CD4-positive, alpha-beta T cell (primary cell): ENCODE measurements at regions of chr1 and their contacts with region 1.

Region 1: DNA sequence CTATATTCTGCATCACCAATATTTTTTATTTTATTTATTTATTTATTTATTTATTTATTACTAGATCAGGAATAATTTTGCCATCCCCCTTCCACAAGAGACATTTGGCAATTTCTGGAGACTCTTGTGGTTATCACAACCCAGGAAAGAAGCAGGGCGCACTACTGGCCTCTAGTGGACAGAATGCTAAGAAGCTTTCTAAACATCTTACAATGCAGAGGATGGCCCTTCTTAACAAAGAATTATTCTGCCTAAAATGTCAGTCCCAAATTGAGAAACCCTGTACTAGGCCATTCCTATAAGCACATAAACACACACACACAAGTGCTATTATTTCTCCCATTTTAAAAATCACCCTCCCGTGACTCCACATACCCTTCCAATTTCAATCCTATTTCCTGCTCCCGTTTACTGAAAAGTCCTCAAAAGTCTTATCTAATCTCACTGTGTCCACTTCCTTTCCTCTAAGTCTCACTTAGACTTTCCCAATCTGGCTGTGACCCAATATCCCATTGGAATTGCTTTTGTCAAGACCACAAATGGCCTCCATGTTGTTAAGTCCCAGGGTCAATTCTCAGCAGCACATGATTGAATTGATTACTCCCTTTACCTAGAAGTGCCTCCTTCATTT is 43.7 kb upstream of the RNF11 start:
- DNase-seq: peak; percentile 22 to 73 (median 42)
- ATAC-seq: peak; percentile 58
- H3K4me3 ChIP-seq: no peak overlapping the region
- H3K4me3 Mint-ChIP-seq: no peak overlapping the region
- H3K27ac ChIP-seq: no peak overlapping the region
- H3K27ac Mint-ChIP-seq: no peak overlapping the region
- H3K4me1 ChIP-seq: no peaks in the 10 kb centered on the region
- H3K4me1 Mint-ChIP-seq: no peaks in the 10 kb centered on the region
- H3K27me3 ChIP-seq: peaks cover 0 to 4% of the 10 kb centered on the region in 2 experiments
- H3K27me3 Mint-ChIP-seq: no peaks in the 10 kb centered on the region
- CTCF ChIP-seq: peak; percentile 87

Region 2: GRCh38 chr1:50774759-50775351 is 417.5 kb before region 1 on chr1:
- CTCF ChIA-PET with region 1: interaction called, 15 read pairs
- POLR2A ChIA-PET with region 1: interaction called, 5 read pairs
- intact Hi-C with region 1: loop called (anchors 1 kb)
- DNase-seq: peak in 4 of 14 experiments; percentile 8 to 68 (median 57)
- ATAC-seq: no peak
- H3K4me3 ChIP-seq: no peak overlapping the region
- H3K4me3 Mint-ChIP-seq: no peak overlapping the region
- H3K27ac ChIP-seq: no peak overlapping the region
- H3K27ac Mint-ChIP-seq: no peak overlapping the region
- H3K4me1 ChIP-seq: no peaks in the 10 kb centered on the region
- H3K4me1 Mint-ChIP-seq: peaks cover 8% of the 10 kb centered on the region
- H3K27me3 ChIP-seq: no peaks in the 10 kb centered on the region
- H3K27me3 Mint-ChIP-seq: no peaks in the 10 kb centered on the region
- CTCF ChIP-seq: peak; percentile 86

Region 3: DNA sequence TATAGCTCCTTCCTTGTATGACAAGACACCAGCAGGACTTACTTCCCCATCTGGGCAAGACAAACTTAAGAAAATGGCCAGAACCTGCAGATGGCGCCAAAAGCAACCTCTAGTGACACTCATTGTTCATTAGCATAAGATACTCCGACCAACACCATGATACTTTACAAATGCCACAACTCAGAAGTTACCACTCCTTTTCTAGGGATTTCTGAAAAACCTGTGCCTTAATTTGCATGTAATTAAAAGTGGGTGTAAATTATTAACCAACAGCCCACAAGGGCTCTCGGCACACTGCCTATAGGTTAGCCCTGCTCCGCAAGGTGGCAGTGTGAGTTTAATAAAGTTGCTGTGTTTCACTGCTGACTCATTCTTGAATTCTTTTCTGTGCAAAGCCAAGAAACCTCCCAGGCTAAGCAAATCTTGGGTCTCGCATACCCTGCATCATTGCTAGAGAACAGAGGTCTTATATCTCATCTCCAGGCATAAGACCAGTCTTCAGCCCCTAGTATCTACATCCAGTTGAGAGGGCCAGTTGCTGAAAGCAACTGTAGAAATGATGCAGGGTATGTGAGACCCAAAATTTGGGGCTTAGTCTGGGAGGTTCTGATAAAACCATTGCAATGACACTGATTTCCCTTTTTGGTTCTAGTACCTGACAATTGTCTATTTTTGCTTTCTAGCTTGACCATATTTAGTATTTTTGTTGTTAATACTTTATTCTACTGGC is 318.7 kb before region 1 on chr1:
- CTCF ChIA-PET with region 1: interaction called, 8 read pairs
- POLR2A ChIA-PET with region 1: no interaction called
- intact Hi-C with region 1: loop called (anchors 1 kb)
- DNase-seq: peak; percentile 34 to 77 (median 57)
- ATAC-seq: peak; percentile 76
- H3K4me3 ChIP-seq: peak overlapping the region; percentile 18
- H3K4me3 Mint-ChIP-seq: no peak overlapping the region
- H3K27ac ChIP-seq: no peak overlapping the region
- H3K27ac Mint-ChIP-seq: no peak overlapping the region
- H3K4me1 ChIP-seq: no peaks in the 10 kb centered on the region
- H3K4me1 Mint-ChIP-seq: peaks cover 17% of the 10 kb centered on the region
- H3K27me3 ChIP-seq: no peaks in the 10 kb centered on the region
- H3K27me3 Mint-ChIP-seq: no peaks in the 10 kb centered on the region
- CTCF ChIP-seq: peak; percentile 93

Region 4: DNA sequence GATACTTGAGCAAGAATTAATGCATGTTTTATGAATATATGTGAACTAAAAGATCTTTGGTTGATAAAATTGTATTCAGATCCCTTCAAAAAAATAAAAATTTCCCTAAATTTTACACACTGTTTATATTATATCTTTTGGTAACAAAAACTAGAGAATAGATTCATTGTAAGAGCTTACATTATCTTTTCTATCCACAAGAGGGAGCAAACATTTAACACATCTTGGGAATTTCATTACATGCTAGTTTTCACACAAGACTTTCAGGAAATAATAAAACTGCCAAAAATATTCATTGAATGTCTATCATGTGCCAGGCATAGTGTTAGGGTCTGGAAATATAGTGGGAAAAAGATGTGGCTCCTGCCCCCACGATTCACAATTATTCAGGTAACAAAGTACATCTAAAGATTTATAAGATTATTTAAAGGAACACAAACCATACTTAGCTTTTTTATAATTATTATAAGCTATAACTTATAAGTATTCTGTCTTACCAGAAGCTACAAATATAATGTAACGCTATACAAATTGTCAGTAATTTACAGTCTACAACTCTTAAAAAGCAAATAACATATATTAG is 262.9 kb before region 1 on chr1:
- CTCF ChIA-PET with region 1: interaction called, 11 read pairs
- POLR2A ChIA-PET with region 1: no interaction called
- intact Hi-C with region 1: loop called (anchors 1 kb)
- DNase-seq: peak in 3 of 14 experiments; percentile 39 to 50 (median 46)
- ATAC-seq: no peak
- H3K4me3 ChIP-seq: no peak overlapping the region
- H3K4me3 Mint-ChIP-seq: no peak overlapping the region
- H3K27ac ChIP-seq: no peak overlapping the region
- H3K27ac Mint-ChIP-seq: no peak overlapping the region
- H3K4me1 ChIP-seq: no peaks in the 10 kb centered on the region
- H3K4me1 Mint-ChIP-seq: peaks cover 25% of the 10 kb centered on the region
- H3K27me3 ChIP-seq: no peaks in the 10 kb centered on the region
- H3K27me3 Mint-ChIP-seq: no peaks in the 10 kb centered on the region
- CTCF ChIP-seq: peak; percentile 69

Region 5: GRCh38 chr1:51296383-51297357 is 104.3 kb after region 1 on chr1:
- CTCF ChIA-PET with region 1: interaction called, 9 read pairs
- POLR2A ChIA-PET with region 1: no interaction called
- intact Hi-C with region 1: loop called in 1 of 2 experiments (anchors 5 kb)
- DNase-seq: peak; percentile 41 to 80 (median 58)
- ATAC-seq: peak; percentile 81
- H3K4me3 ChIP-seq: peak overlapping the region; percentile 51
- H3K4me3 Mint-ChIP-seq: peak overlapping the region; percentile 59
- H3K27ac ChIP-seq: no peak overlapping the region
- H3K27ac Mint-ChIP-seq: no peak overlapping the region
- H3K4me1 ChIP-seq: peaks cover 12% of the 10 kb centered on the region
- H3K4me1 Mint-ChIP-seq: peaks cover 12% of the 10 kb centered on the region
- H3K27me3 ChIP-seq: no peaks in the 10 kb centered on the region
- H3K27me3 Mint-ChIP-seq: no peaks in the 10 kb centered on the region
- CTCF ChIP-seq: peak; percentile 85